ENCODE measurements at regions of chr4 and their contacts with region 1.

Region 1: GRCh38 chr4:76179398-76180318 is 31.5 kb upstream of the NUP54 start:
- DNase-seq: peak; percentile 85 to 87
- H3K4me3 ChIP-seq: no peak overlapping the region
- H3K27ac ChIP-seq: no peak overlapping the region
- H3K4me1 ChIP-seq: peaks cover 0 to 4% (median 0%) of the 10 kb centered on the region in 4 donors
- H3K27me3 ChIP-seq: no peaks in the 10 kb centered on the region
- CTCF ChIP-seq: peak; percentile 82 to 84

Region 2: GRCh38 chr4:76504613-76505465 is 325.2 kb after region 1 on chr4:
- intact Hi-C with region 1: loop called (anchors 10 kb)
- DNase-seq: no peak
- H3K4me3 ChIP-seq: no peak overlapping the region
- H3K27ac ChIP-seq: no peak overlapping the region
- H3K4me1 ChIP-seq: no peaks in the 10 kb centered on the region
- H3K27me3 ChIP-seq: no peaks in the 10 kb centered on the region
- CTCF ChIP-seq: peak; percentile 71 to 77